Activated T-helper 1 cell treated with anti-CD3 and anti-CD28 coated beads, Interleukin-12 subunit alpha, Interleukin-12 subunit beta, Interleukin-2, Interleukin-4 antibody, amounts not matched to agents 30 ng/mL and 10 ng/mL and 1 ng/mL, durations not matched to agents 14 hours and 24 hours and 36 hours (primary cell): ENCODE measurements at regions of chr4 and their contacts with region 1.

Region 1: DNA sequence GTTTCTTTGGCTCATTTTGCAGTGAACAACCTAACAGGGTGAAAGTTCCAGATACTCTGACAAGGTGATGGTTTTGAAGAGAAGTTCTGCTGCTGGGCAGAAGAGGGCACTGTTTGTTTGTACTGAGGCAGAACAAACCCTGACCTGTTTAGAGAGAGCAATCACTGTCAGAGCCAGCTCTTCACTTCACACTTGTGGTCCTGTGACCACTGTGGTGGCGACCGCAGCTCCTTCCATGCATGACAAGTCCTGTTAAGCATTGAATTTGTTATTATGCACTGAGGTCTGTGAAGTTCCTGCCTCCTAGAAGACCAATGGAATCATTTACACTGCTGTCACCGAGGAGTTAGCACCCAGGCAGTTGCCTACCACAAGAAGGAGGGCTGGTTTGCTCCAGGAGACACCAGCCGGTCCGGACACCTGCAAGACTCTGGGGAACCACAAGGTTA is 86.6 kb downstream of the ZNF330 start:
- DNase-seq: peak; percentile 49
- H3K4me3 Mint-ChIP-seq: no peak overlapping the region
- H3K27ac Mint-ChIP-seq: no peak overlapping the region
- H3K4me1 Mint-ChIP-seq: no peaks in the 10 kb centered on the region
- H3K27me3 Mint-ChIP-seq: peaks cover 2% of the 10 kb centered on the region

Region 2: GRCh38 chr4:141220655-141221605 is 86.3 kb before region 1 on chr4 and contains the start of gene ZNF330:
- intact Hi-C with region 1: loop called (anchors 5 kb)
- DNase-seq: peak; percentile 83
- H3K4me3 Mint-ChIP-seq: peak within 1 kb of the TSS; percentile 93
- H3K27ac Mint-ChIP-seq: peak within 1 kb of the TSS; percentile 98
- H3K4me1 Mint-ChIP-seq: peaks cover 47% of the 10 kb centered on the region
- H3K27me3 Mint-ChIP-seq: peaks cover 6% of the 10 kb centered on the region
- total RNA-seq, gene ZNF330: 57.8 and 62.9 TPM in 2 replicates

Region 3: DNA sequence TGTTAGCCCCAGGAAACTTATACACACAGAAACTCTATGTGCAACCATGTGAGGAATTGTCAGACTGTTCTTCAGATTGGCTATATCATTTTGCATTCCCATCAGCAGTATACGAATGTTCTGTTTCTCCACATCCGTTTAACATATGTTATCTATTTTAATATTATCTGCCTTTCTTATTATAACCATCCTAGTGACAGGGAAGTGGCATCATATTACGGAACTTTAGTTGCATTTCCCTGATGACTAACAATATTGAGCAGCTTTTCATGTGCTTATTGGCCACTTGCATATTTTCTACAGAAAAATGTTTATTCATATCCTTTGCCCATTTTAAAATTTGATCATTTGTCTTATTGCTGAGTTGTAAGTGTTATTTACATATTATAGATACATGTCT is 292.6 kb after region 1 on chr4:
- intact Hi-C with region 1: no loop called
- DNase-seq: no peak
- H3K4me3 Mint-ChIP-seq: no peak overlapping the region
- H3K27ac Mint-ChIP-seq: no peak overlapping the region
- H3K4me1 Mint-ChIP-seq: no peaks in the 10 kb centered on the region
- H3K27me3 Mint-ChIP-seq: peaks cover 3% of the 10 kb centered on the region

Region 4: DNA sequence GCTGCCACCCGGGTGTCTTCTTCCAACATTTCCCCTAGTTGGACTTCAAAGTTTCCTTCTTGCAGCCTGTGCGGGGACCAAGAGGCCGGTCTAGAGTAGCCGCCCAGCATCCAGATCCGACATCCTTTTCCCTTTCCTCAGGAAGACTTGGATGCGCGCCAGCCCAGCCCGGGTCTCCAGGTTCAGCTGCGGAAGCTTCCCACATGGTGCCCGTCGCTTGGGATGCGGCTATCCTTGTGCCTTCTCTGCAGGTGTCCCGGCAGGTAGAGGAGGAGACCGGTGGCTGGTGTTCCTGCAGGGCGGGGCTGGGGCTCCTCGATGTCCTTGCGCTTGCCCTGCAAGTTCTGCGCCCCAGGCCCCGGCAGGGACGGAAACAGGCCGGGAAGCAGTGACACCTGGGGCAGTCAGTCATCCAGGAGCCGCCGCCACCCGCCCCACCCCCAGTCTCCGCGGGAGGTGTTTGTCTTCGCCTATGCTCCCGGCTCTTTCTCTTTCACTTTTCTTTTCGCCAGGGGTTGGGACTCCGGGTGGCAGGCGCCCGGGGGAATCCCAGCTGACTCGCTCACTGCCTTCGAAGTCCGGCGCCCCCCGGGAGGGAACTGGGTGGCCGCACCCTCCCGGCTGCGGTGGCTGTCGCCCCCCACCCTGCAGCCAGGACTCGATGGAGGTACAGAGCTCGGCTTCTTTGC is 329.0 kb after region 1 on chr4 and contains the start of gene IL15:
- intact Hi-C with region 1: loop called (anchors 10 kb)
- DNase-seq: peak; percentile 70
- H3K4me3 Mint-ChIP-seq: peak within 1 kb of the TSS; percentile 96
- H3K27ac Mint-ChIP-seq: peak within 1 kb of the TSS; percentile 81
- H3K4me1 Mint-ChIP-seq: peaks cover 25% of the 10 kb centered on the region
- H3K27me3 Mint-ChIP-seq: peaks cover 20% of the 10 kb centered on the region
- total RNA-seq, gene IL15: 0.67 and 1.8 TPM in 2 replicates

Region 5: GRCh38 chr4:141711014-141711610 is 403.8 kb after region 1 on chr4:
- intact Hi-C with region 1: loop called (anchors 2 kb)
- DNase-seq: no peak
- H3K4me3 Mint-ChIP-seq: no peak overlapping the region
- H3K27ac Mint-ChIP-seq: no peak overlapping the region
- H3K4me1 Mint-ChIP-seq: peaks cover 2% of the 10 kb centered on the region
- H3K27me3 Mint-ChIP-seq: peaks cover 2% of the 10 kb centered on the region

Region 6: GRCh38 chr4:141771889-141772830 is 464.9 kb after region 1 on chr4:
- intact Hi-C with region 1: loop called (anchors 10 kb)
- DNase-seq: peak; percentile 4
- H3K4me3 Mint-ChIP-seq: peak overlapping the region; percentile 56
- H3K27ac Mint-ChIP-seq: peak overlapping the region; percentile 44
- H3K4me1 Mint-ChIP-seq: peaks cover 22% of the 10 kb centered on the region
- H3K27me3 Mint-ChIP-seq: peaks cover 3% of the 10 kb centered on the region

Region 7: DNA sequence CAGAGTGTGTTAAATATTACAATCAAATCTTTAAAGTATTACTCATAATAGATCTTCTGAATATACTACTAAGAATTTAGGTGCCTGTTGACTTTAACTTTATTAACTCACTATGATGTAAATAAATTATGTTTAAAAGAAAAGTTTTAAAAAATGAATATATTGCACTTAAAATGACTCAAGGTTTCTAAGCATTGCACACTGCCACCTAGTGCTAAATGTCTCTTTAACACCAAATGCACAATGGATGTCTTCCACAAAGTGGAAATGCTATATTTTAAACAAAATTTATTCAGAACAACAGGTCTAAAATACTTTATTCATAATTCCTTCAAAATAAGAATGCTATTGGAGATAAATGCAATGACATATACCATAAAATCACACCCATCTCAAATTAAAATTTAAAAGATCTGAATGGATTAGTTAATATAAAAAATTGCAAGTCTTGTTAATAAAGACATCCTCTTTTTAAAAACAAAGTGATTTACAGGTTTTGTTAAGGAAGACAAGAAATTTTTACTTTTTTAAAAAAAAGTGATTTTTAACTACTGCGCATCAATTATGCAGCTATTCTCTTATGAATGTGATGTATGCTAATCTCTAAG is 1533.4 kb after region 1 on chr4:
- intact Hi-C with region 1: loop called (anchors 1 kb)
- DNase-seq: no peak
- H3K4me3 Mint-ChIP-seq: no peak overlapping the region
- H3K27ac Mint-ChIP-seq: no peak overlapping the region
- H3K4me1 Mint-ChIP-seq: peaks cover 11% of the 10 kb centered on the region
- H3K27me3 Mint-ChIP-seq: peaks cover 7% of the 10 kb centered on the region